MCF 10A (cell line): ENCODE measurements at regions of chr5 and their contacts with region 1.

Region 1: DNA sequence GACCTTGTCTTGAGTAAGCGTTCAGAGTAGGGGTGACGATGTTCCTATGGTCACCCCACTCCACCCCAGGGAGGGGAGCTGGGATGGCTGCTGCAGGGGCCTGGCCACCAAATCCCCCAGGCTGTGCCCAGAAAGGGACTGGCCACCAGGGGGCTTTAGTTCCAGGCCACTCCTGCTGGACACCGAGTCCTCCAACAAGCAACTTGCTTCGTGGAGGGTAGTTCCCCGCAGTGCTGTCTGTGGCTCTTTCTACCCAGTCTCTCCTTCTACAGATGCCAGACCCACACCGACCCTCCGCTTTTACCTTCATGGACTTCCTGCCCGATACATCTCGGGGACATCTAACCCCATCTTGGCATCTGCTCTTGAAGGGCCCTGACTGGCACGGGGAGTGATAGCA is 35.7 kb upstream of the GABRP start:
- DNase-seq: peak; percentile 51
- H3K4me3 Mint-ChIP-seq: no peak overlapping the region
- H3K27ac Mint-ChIP-seq: no peak overlapping the region
- H3K4me1 Mint-ChIP-seq: peaks cover 26% of the 10 kb centered on the region
- H3K27me3 Mint-ChIP-seq: no peaks in the 10 kb centered on the region
- CTCF ChIP-seq: peak; percentile 25

Region 2: DNA sequence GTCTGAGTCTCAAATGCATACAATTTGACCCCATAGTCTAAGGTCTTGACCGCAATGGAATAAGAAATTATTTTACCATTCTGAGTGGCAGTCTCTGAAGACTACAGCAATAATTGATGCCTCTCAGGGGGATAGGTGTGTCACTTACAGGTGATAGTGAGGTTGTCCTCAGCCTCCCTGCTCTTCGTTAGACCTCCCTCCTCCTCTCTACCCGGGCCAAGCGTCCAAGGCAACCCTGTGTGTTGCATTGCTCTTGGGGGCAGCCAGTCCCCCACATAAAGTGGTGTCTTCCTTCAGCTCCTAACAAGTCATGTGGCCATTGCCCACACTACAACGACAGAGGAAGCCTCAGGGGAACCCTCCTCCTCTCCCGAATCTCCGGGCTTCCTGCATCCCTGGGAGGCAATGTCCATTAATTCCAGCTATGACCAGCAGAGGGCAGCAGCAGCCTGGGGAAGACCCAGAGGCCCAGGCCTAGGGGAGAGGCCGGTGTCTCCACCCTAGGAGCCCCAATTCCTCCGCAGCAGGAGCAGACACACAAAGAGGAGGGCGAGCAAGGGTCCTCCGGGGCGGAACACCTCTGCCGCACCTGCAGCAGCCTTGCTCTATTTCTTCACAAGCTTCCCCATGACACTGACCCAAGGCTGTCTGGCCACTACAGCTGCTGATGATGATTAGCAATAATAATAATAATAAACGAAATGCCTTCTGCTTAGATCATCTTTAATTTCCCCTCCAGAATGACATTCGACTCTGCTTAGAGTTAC is 109.2 kb before region 1 on chr5:
- CTCF ChIA-PET with region 1: interaction called, 35 read pairs
- POLR2A ChIA-PET with region 1: no interaction called
- intact Hi-C with region 1: loop called (anchors 1 kb)
- DNase-seq: peak; percentile 84
- H3K4me3 Mint-ChIP-seq: no peak overlapping the region
- H3K27ac Mint-ChIP-seq: no peak overlapping the region
- H3K4me1 Mint-ChIP-seq: peaks cover 19% of the 10 kb centered on the region
- H3K27me3 Mint-ChIP-seq: no peaks in the 10 kb centered on the region
- CTCF ChIP-seq: peak; percentile 98

Region 3: DNA sequence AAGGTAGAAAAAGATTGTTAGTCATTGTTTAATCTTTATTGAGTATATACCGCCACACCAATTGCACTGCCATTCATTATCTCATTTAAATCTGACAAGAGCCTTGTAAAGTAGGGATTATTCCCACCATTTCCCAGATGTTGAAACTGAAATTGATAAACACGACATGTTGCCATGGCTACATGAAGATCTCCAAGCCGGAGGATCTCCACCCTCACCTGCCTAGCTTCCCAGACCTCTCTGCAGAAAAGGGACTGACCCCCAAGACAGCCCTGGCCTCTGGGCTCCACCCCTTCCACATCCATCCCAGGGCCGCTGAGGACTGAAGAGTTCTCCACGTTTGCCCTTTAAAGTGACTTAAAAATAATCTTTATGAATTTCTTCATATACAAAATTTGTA is 49.1 kb before region 1 on chr5:
- CTCF ChIA-PET with region 1: no interaction called
- POLR2A ChIA-PET with region 1: no interaction called
- intact Hi-C with region 1: no loop called
- DNase-seq: no peak
- H3K4me3 Mint-ChIP-seq: no peak overlapping the region
- H3K27ac Mint-ChIP-seq: no peak overlapping the region
- H3K4me1 Mint-ChIP-seq: no peaks in the 10 kb centered on the region
- H3K27me3 Mint-ChIP-seq: peaks cover 70% of the 10 kb centered on the region
- CTCF ChIP-seq: no peak

Region 4: GRCh38 chr5:170722316-170722715 is 25.5 kb before region 1 on chr5:
- CTCF ChIA-PET with region 1: interaction called, 23 read pairs
- POLR2A ChIA-PET with region 1: interaction called, 3 read pairs
- intact Hi-C with region 1: no loop called
- DNase-seq: no peak
- H3K4me3 Mint-ChIP-seq: no peak overlapping the region
- H3K27ac Mint-ChIP-seq: no peak overlapping the region
- H3K4me1 Mint-ChIP-seq: no peaks in the 10 kb centered on the region
- H3K27me3 Mint-ChIP-seq: no peaks in the 10 kb centered on the region
- CTCF ChIP-seq: no peak

Region 5: DNA sequence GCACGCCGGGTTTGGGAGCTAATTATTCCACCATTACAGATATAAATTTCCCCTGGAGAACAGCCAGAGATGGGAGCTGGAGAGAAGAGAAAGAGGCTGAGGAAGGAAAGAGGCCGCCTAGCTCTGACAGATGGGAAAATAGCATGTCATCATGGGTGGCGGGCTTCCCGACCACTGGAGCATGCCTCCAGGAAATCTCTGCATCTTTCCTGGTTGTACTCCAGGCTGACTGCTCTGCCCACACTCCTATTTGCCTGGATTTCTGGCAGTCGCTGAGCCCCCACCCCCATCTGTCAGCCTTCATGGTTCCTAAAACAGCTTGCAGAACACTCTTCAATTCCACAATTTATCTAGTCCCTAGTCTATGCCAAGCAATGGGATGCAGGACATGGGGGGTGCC is 21.4 kb after region 1 on chr5:
- CTCF ChIA-PET with region 1: interaction called, 38 read pairs
- POLR2A ChIA-PET with region 1: no interaction called
- intact Hi-C with region 1: no loop called
- DNase-seq: no peak
- H3K4me3 Mint-ChIP-seq: no peak overlapping the region
- H3K27ac Mint-ChIP-seq: no peak overlapping the region
- H3K4me1 Mint-ChIP-seq: peaks cover 5% of the 10 kb centered on the region
- H3K27me3 Mint-ChIP-seq: no peaks in the 10 kb centered on the region
- CTCF ChIP-seq: no peak

Region 6: GRCh38 chr5:170791325-170791954 is 43.6 kb after region 1 on chr5:
- CTCF ChIA-PET with region 1: interaction called, 992 read pairs
- POLR2A ChIA-PET with region 1: interaction called, 49 read pairs
- intact Hi-C with region 1: loop called (anchors 1 kb)
- DNase-seq: peak; percentile 88
- H3K4me3 Mint-ChIP-seq: no peak overlapping the region
- H3K27ac Mint-ChIP-seq: no peak overlapping the region
- H3K4me1 Mint-ChIP-seq: no peaks in the 10 kb centered on the region
- H3K27me3 Mint-ChIP-seq: no peaks in the 10 kb centered on the region
- CTCF ChIP-seq: peak; percentile 94

Region 7: GRCh38 chr5:170917113-170917512 is 169.3 kb after region 1 on chr5:
- CTCF ChIA-PET with region 1: no interaction called
- POLR2A ChIA-PET with region 1: no interaction called
- intact Hi-C with region 1: loop called (anchors 1 kb)
- DNase-seq: peak; percentile 22
- H3K4me3 Mint-ChIP-seq: no peak overlapping the region
- H3K27ac Mint-ChIP-seq: no peak overlapping the region
- H3K4me1 Mint-ChIP-seq: no peaks in the 10 kb centered on the region
- H3K27me3 Mint-ChIP-seq: no peaks in the 10 kb centered on the region
- CTCF ChIP-seq: peak; percentile 36

Region 8: DNA sequence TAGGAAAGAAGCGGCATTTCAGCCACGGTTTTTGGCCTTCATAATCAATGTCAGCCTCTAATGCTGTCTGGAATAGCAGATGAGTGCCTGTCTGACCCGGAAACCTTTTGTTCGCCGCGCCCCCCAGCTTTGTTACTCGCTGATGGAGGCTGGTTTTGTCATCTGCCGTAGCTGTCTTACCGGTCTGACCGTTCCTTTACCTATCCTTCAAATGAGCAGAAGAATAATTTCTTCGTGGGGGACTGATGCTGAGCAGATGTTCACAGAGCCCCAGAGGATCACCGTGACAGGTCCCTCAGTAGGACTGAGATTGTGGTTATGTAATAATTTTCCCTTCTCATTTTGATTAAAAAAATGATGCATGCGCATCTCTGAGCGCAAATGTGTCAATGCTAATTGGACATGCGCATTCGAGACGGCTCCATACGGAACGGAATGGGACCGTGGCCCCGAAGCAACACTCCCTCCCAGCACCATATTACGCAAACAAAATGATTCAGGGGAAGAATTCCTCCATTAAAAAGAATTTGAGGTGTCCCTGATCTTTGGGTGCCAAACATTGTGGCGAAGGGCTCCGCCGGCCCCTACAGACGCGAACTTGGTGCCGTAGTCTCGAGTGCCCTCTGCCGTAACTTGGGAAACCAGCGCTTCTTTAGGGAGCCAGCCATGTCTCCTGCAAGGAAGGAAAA is 588.8 kb after region 1 on chr5:
- CTCF ChIA-PET with region 1: interaction called, 4 read pairs
- POLR2A ChIA-PET with region 1: no interaction called
- intact Hi-C with region 1: loop called (anchors 1 kb)
- DNase-seq: peak; percentile 68
- H3K4me3 Mint-ChIP-seq: peak overlapping the region; percentile 75
- H3K27ac Mint-ChIP-seq: no peak overlapping the region
- H3K4me1 Mint-ChIP-seq: no peaks in the 10 kb centered on the region
- H3K27me3 Mint-ChIP-seq: peaks cover 7% of the 10 kb centered on the region
- CTCF ChIP-seq: peak; percentile 97